ENCODE measurements at regions of chr11 and their contacts with region 1.

Region 1: DNA sequence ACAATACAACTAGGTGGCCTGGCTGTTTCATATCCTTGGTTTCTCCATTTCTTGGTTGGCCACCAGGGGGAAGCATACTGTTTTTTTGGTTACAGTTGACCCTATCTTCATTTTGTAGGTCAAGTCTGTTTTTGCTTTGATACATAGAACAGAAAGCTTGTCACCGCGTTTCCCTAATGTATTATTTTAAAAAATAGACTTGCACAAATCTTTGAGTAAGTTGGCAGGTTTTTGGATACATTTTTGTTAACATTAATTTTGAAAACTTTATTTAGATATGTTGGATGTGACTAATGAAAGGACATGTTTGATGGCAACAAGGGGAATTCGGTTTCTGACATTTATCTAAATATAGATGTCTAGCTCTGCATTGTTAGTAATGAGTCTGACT is 3.0 kb downstream of the NCR3LG1 start:
- DNase-seq: peak; percentile 82
- H3K4me3 Mint-ChIP-seq: peak overlapping the region; percentile 81
- H3K27ac Mint-ChIP-seq: no peak overlapping the region
- H3K4me1 Mint-ChIP-seq: peaks cover 25% of the 10 kb centered on the region
- H3K27me3 Mint-ChIP-seq: peaks cover 7% of the 10 kb centered on the region

Region 2: DNA sequence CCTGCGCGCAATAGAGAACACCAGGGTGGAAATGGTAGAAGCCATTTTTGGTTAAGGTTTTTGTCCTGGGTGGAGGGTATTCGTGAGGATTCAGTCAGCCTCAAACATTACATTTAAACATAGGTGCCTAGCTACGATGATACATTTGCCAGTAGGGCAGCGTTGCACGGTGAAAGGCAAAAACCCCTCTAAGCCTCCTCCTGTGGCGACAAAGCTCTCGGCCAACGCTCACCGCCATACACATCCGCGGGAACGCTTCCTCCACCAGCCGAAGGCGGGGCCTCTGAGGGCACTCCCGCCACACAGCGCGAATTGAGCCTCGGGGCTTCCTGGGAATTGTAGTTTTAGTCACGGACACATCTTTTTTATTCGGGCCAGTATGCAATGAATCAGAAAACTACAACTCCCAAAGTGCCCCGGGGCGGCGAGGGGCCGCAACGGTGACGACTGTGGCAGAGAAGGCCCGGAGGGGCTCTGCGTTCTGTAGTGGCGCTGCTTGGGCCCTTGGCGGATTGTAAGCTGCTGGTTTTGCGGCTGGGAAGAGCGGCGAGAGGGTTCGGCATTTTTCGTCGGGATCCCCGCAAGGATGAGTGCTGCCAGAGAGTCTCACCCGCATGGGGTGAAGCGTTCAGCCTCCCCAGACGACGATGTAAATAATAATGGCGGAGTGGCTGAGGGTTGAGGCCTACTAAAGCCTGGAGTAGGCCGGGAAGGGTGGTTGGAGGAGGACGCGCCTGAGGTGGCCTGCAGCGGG is 616.2 kb before region 1 on chr11 and contains the start of gene C11orf58:
- CTCF ChIA-PET with region 1: no interaction called
- intact Hi-C with region 1: loop called (anchors 5 kb)
- DNase-seq: peak; percentile 97
- H3K4me3 Mint-ChIP-seq: peak within 1 kb of the TSS; percentile 73
- H3K27ac Mint-ChIP-seq: peak within 1 kb of the TSS; percentile 85
- H3K4me1 Mint-ChIP-seq: peaks cover 22% of the 10 kb centered on the region
- H3K27me3 Mint-ChIP-seq: no peaks in the 10 kb centered on the region
- total RNA-seq, gene C11orf58: 114 to 123 TPM

Region 3: DNA sequence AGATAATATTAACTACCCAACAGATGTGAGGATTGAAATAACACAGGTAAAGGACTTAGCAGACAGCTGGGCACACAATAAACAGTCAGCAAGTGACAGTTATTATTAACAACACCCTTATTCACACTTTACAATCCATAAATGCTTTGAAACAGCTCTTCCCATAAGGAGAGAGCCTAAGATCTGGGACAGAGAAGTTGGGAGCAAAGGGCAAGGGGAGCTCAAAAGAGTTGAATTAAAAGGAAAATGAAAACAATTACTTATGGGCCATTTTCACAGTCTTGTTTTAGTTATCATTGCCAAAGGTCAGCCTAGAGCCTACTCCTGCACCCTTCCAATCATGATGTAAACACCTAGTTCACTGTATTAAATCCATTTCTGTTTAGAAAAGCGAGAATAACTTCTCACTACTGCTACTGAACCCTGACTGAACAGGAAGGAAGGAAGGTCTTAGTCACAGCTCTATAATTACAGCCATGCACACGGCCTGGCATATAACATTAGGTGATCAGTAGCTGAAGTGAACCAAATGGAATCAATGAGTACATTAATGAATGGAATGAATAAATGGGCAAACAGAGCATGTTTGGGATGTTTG is 451.7 kb before region 1 on chr11:
- CTCF ChIA-PET with region 1: interaction called, 3 read pairs
- intact Hi-C with region 1: loop called (anchors 5 kb)
- DNase-seq: peak; percentile 30
- H3K4me3 Mint-ChIP-seq: peak overlapping the region; percentile 3
- H3K27ac Mint-ChIP-seq: peak overlapping the region; percentile 92
- H3K4me1 Mint-ChIP-seq: peaks cover 43% of the 10 kb centered on the region
- H3K27me3 Mint-ChIP-seq: no peaks in the 10 kb centered on the region

Region 4: DNA sequence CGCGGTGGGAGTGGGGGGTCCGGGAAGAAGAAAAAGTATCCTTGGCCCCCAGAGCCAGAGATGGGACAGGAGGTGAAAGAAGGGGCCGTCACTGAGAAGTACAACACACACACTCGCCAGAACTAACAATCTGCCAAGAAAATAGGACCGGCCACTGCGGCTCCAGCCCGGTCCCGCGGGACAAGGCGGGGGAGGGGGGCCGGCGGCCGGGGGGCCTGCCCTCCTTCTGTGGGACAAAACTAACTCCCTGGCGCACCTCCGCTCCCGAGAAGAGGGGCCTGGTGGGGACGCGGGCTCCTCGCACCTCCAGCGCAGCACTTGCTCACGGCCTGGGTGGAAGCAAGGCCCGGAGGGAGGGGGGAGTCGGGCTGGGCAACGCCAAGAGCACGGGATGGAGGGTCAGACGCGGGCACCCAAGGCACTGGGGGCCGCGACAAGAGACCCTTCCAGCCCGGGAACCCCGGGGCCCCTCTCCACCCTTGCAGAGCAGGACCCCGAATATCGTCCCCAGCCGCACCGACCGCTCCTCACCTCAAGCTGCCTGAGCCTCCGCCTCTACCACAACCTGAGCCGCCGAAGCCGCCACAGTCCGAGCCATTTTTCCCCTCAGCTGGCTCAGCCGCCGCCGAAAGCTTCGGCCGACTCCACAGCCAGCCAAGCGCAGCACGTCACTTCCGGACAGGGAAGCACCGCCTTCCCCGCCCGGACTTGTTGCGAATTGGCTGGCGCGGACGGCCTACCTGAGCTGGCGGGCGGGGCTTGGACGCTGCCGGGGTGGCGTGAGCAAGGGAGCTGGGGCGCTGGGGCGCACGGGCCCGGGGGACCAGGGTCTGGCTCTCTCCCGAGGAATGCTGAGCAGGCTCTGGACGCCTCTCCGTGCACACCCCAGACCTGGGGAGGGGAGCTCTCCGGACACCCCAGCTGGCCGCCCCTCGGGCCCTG is 147.0 kb before region 1 on chr11 and contains the start of gene PIK3C2A:
- CTCF ChIA-PET with region 1: interaction called, 4 read pairs
- intact Hi-C with region 1: loop called (anchors 1 kb)
- DNase-seq: peak; percentile 97
- H3K4me3 Mint-ChIP-seq: peak within 1 kb of the TSS; percentile 99
- H3K27ac Mint-ChIP-seq: peak within 1 kb of the TSS; percentile 92
- H3K4me1 Mint-ChIP-seq: peaks cover 30% of the 10 kb centered on the region
- H3K27me3 Mint-ChIP-seq: no peaks in the 10 kb centered on the region
- total RNA-seq, gene PIK3C2A: 16.4 to 17.3 TPM

Region 5: DNA sequence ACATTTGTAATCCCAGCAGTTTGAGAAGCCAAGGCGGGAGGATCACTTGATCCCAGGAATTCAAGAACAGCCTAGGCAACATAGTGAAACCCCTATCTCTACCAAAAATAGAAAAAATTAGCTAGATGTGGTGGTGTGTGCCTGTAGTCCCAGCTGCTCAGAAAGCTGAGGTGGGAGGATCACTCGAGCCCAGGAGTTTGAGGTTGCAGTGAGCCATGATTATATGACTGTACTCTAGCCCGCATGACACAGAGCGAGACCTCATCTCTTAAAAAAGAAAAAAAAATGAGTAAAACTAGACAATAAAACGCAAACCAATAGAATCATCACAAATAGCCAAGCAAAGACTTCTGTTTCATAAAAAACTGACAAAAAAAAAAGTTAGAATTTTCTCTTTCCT is 56.3 kb before region 1 on chr11:
- CTCF ChIA-PET with region 1: no interaction called
- intact Hi-C with region 1: loop called (anchors 1 kb)
- DNase-seq: peak; percentile 82
- H3K4me3 Mint-ChIP-seq: no peak overlapping the region
- H3K27ac Mint-ChIP-seq: peak overlapping the region; percentile 30
- H3K4me1 Mint-ChIP-seq: peaks cover 41% of the 10 kb centered on the region
- H3K27me3 Mint-ChIP-seq: no peaks in the 10 kb centered on the region

Region 6: GRCh38 chr11:17366495-17366894 is 11.9 kb after region 1 on chr11:
- CTCF ChIA-PET with region 1: interaction called, 12 read pairs
- intact Hi-C with region 1: no loop called
- DNase-seq: no peak
- H3K4me3 Mint-ChIP-seq: no peak overlapping the region
- H3K27ac Mint-ChIP-seq: no peak overlapping the region
- H3K4me1 Mint-ChIP-seq: no peaks in the 10 kb centered on the region
- H3K27me3 Mint-ChIP-seq: no peaks in the 10 kb centered on the region

Region 7: GRCh38 chr11:17504330-17505107 is 149.9 kb after region 1 on chr11:
- CTCF ChIA-PET with region 1: no interaction called
- intact Hi-C with region 1: loop called (anchors 1 kb)
- DNase-seq: peak; percentile 85
- H3K4me3 Mint-ChIP-seq: no peak overlapping the region
- H3K27ac Mint-ChIP-seq: no peak overlapping the region
- H3K4me1 Mint-ChIP-seq: no peaks in the 10 kb centered on the region
- H3K27me3 Mint-ChIP-seq: peaks cover 4% of the 10 kb centered on the region